ENCODE measurements at regions of chr7 and their contacts with region 1.

Region 1: GRCh38 chr7:100538654-100539435 is at the start of gene AGFG2:
- DNase-seq: peak; percentile 99 to 100 (median 100)
- ATAC-seq: peak; percentile 97
- H3K4me3 ChIP-seq: peak within 1 kb of the TSS; percentile 87
- H3K27ac ChIP-seq: peak within 1 kb of the TSS; percentile 84
- H3K4me1 ChIP-seq: peaks cover 34 to 37% of the 10 kb centered on the region in 2 experiments
- H3K27me3 ChIP-seq: no peaks in the 10 kb centered on the region
- CTCF ChIP-seq: peak in 1 of 3 experiments; percentile 1; a peak in 1 of 6 replicates
- EP300 ChIP-seq: no peak
- POLR2A ChIP-seq: peak; percentile 87
- RAD21 ChIP-seq: no peak
- polyA plus RNA-seq, gene AGFG2: 0.31 to 0.32 TPM

Region 2: GRCh38 chr7:100503345-100503725 is 35.5 kb before region 1 on chr7:
- CTCF ChIA-PET with region 1: no interaction called
- POLR2A ChIA-PET with region 1: interaction called, 4 read pairs
- in situ Hi-C with region 1: no loop called
- intact Hi-C with region 1: loop called (anchors 5 kb)
- DNase-seq: peak in 1 of 4 experiments; percentile 6
- ATAC-seq: peak; percentile 43; the same call in 2 of the 3 replicates
- H3K4me3 ChIP-seq: no peak overlapping the region
- H3K27ac ChIP-seq: no peak overlapping the region
- H3K4me1 ChIP-seq: peaks cover 4 to 22% of the 10 kb centered on the region in 2 experiments; a peak in 3 of 5 replicates
- H3K27me3 ChIP-seq: no peaks in the 10 kb centered on the region
- CTCF ChIP-seq: no peak
- EP300 ChIP-seq: no peak
- POLR2A ChIP-seq: no peak
- RAD21 ChIP-seq: no peak

Region 3: DNA sequence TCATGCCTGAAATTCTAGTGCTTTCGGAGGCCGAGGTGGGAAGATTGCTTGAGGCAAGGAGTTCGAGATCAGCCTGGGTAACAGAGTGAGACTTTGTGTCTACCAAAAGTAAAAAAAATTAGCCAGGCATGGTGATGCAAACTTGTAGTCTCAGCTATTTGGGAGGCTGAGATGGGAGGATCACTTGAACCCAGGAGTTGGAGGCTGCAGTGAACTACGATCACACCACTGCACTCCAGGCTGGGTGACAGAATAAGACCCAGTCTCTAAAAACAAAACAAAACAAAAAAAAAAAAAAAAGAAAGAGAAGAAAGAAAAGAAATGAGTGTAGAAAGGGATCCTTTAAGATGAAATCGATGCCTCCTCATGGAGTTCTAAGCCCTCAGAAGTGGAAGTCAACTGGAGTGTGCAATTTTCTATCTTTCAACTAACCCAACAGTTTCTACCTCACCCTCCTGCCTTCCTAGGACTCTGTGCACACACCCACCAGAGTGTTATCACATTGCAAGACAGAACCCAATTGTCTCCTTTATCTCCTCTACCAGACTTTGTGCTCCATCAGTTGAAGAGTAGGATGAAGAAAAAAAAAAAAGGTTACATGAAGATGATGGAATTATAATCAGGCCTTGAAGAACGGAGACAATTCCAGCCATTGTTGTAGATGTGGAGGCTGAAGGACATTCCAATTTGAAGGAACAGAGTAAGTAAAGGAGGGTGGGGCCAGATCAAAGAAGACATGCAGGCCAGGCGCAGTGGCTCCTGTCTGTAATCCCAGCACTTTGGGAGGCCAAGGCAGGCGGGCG is 28.2 kb before region 1 on chr7:
- CTCF ChIA-PET with region 1: no interaction called
- POLR2A ChIA-PET with region 1: interaction called, 4 read pairs
- in situ Hi-C with region 1: no loop called
- intact Hi-C with region 1: loop called (anchors 2 kb)
- DNase-seq: peak; percentile 60 to 93 (median 78)
- ATAC-seq: peak; percentile 93
- H3K4me3 ChIP-seq: no peak overlapping the region
- H3K27ac ChIP-seq: peak overlapping the region; percentile 3
- H3K4me1 ChIP-seq: peaks cover 24 to 43% of the 10 kb centered on the region in 2 experiments; a peak in 4 of 5 replicates
- H3K27me3 ChIP-seq: no peaks in the 10 kb centered on the region
- CTCF ChIP-seq: no peak
- EP300 ChIP-seq: peak; percentile 89
- POLR2A ChIP-seq: no peak
- RAD21 ChIP-seq: no peak

Region 4: GRCh38 chr7:100553864-100554263 is 15.0 kb after region 1 on chr7:
- CTCF ChIA-PET with region 1: no interaction called
- POLR2A ChIA-PET with region 1: interaction called, 14 read pairs
- in situ Hi-C with region 1: no loop called
- intact Hi-C with region 1: no loop called
- DNase-seq: no peak
- ATAC-seq: no peak
- H3K4me3 ChIP-seq: no peak overlapping the region
- H3K27ac ChIP-seq: no peak overlapping the region
- H3K4me1 ChIP-seq: peaks cover 7 to 10% of the 10 kb centered on the region in 2 experiments; a peak in 3 of 5 replicates
- H3K27me3 ChIP-seq: no peaks in the 10 kb centered on the region
- CTCF ChIP-seq: no peak
- EP300 ChIP-seq: no peak
- POLR2A ChIP-seq: no peak
- RAD21 ChIP-seq: no peak

Region 5: GRCh38 chr7:100827330-100828227 is 288.7 kb after region 1 on chr7 and contains the start of gene EPHB4:
- CTCF ChIA-PET with region 1: no interaction called
- POLR2A ChIA-PET with region 1: no interaction called
- in situ Hi-C with region 1: no loop called
- intact Hi-C with region 1: no loop called
- DNase-seq: peak; percentile 89 to 97 (median 91)
- ATAC-seq: peak; percentile 72
- H3K4me3 ChIP-seq: peak within 1 kb of the TSS; percentile 71
- H3K27ac ChIP-seq: peak within 1 kb of the TSS; percentile 60
- H3K4me1 ChIP-seq: peaks cover 17 to 61% of the 10 kb centered on the region in 2 experiments; a peak in 4 of 5 replicates
- H3K27me3 ChIP-seq: no peaks in the 10 kb centered on the region
- CTCF ChIP-seq: peak; percentile 77 to 88 (median 80)
- EP300 ChIP-seq: no peak
- POLR2A ChIP-seq: peak; percentile 74
- RAD21 ChIP-seq: peak; percentile 31 to 63; a peak in 2 of 4 replicates
- polyA plus RNA-seq, gene EPHB4: 1.2 to 1.5 TPM

Measured in K562 (cell line).